Activated CD4-positive, alpha-beta memory T cell treated with anti-CD3 and anti-CD28 coated beads for 36 hours (primary cell): ENCODE measurements at regions of chr11 and their contacts with region 1.

Region 1: GRCh38 chr11:114036156-114036811 is 23.2 kb upstream of the ZBTB16 start:
- DNase-seq: peak; percentile 69
- H3K4me3 Mint-ChIP-seq: no peak overlapping the region
- H3K27ac Mint-ChIP-seq: no peak overlapping the region
- H3K4me1 Mint-ChIP-seq: no peaks in the 10 kb centered on the region
- H3K27me3 Mint-ChIP-seq: peaks cover 3% of the 10 kb centered on the region

Region 2: GRCh38 chr11:113994077-113994954 is 42.0 kb before region 1 on chr11:
- CTCF ChIA-PET with region 1: interaction called, 17 read pairs
- POLR2A ChIA-PET with region 1: no interaction called
- intact Hi-C with region 1: no loop called
- DNase-seq: peak; percentile 34
- H3K4me3 Mint-ChIP-seq: no peak overlapping the region
- H3K27ac Mint-ChIP-seq: no peak overlapping the region
- H3K4me1 Mint-ChIP-seq: no peaks in the 10 kb centered on the region
- H3K27me3 Mint-ChIP-seq: peaks cover 21% of the 10 kb centered on the region

Region 3: GRCh38 chr11:114059278-114059983 is 23.1 kb after region 1 on chr11 and contains the start of gene ZBTB16:
- CTCF ChIA-PET with region 1: interaction called, 11 read pairs
- POLR2A ChIA-PET with region 1: no interaction called
- intact Hi-C with region 1: no loop called
- DNase-seq: peak; percentile 75
- H3K4me3 Mint-ChIP-seq: peak within 1 kb of the TSS; percentile 80
- H3K27ac Mint-ChIP-seq: peak within 1 kb of the TSS; percentile 67
- H3K4me1 Mint-ChIP-seq: peaks cover 6% of the 10 kb centered on the region
- H3K27me3 Mint-ChIP-seq: peaks cover 16% of the 10 kb centered on the region
- total RNA-seq, gene ZBTB16: 7.7 to 9.7 TPM

Region 4: DNA sequence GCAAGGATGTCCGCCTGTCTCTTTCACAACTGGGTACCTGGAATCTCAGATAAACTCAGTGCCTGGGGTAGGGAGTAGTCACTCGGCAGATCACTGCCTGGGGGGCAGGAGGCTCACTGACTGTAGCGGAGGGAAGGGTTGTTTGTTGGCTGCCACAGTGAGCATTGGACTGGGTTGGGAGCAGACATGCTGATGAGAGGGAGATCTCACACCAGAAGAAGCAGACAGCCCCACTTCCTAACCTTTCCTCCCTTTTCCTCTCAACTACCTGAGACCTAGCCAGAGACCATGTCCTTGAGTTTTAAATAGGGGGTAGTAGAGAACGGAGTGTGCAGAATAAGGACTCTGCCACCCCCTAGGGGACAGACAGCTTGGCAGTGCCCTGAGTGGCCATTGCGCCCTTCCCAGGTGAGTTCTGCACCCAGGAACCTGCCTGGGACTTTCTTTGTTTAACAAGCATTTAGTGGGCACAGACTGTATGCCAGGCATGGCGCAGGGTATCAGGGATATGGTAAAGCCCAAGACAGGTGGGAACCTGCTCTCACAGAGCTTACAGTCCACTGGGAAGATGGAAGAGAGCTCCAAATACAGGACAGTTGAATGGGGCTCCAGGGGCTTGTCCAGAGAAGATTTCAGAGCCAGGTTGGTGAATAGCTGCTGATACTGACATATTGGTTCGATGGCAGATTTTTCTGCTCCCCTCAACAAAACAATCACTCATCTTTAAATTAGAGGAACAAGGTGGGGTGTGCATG is 144.2 kb after region 1 on chr11:
- CTCF ChIA-PET with region 1: interaction called, 13 read pairs
- POLR2A ChIA-PET with region 1: no interaction called
- intact Hi-C with region 1: no loop called
- DNase-seq: peak; percentile 33
- H3K4me3 Mint-ChIP-seq: no peak overlapping the region
- H3K27ac Mint-ChIP-seq: no peak overlapping the region
- H3K4me1 Mint-ChIP-seq: peaks cover 59% of the 10 kb centered on the region
- H3K27me3 Mint-ChIP-seq: no peaks in the 10 kb centered on the region